Activated CD4-positive, alpha-beta T cell treated with anti-CD3 and anti-CD28 coated beads for 36 hours (primary cell): ENCODE measurements at regions of chr10 and their contacts with region 1.

Region 1: GRCh38 chr10:52883996-52884871 is 111.7 kb upstream of the MBL2 start:
- DNase-seq: peak; percentile 41
- ATAC-seq: no peak
- H3K4me3 Mint-ChIP-seq: no peak overlapping the region
- H3K27ac Mint-ChIP-seq: no peak overlapping the region
- H3K4me1 Mint-ChIP-seq: no peaks in the 10 kb centered on the region
- H3K27me3 Mint-ChIP-seq: no peaks in the 10 kb centered on the region

Region 2: DNA sequence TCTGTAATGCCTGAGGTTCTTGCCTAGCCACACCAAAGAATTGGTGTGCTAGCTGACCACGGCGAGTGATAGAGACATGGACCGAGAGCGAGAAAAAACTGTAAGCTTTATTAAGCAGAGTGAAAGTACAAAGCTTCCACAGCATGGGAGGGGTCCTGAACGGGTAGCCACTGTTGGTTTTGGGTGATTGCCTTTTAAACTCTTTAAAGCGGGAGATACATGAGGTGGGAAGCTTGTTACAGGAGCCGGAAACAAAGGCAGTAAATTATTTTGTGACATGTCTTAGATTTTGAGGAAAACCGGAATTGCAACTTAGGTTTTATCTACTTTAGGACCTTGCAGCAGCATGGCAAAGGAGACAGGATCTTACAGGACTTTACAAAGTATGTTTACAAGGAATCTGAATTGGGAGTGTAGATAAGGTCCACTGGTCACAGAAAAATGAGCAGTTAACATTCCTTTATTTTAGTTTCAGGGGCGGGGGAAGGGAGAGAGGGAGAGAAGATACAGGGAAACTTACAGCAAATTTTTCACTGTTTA is 141.0 kb after region 1 on chr10:
- CTCF ChIA-PET with region 1: no interaction called
- POLR2A ChIA-PET with region 1: no interaction called
- intact Hi-C with region 1: no loop called
- DNase-seq: no peak
- ATAC-seq: no peak
- H3K4me3 Mint-ChIP-seq: no peak overlapping the region
- H3K27ac Mint-ChIP-seq: no peak overlapping the region
- H3K4me1 Mint-ChIP-seq: no peaks in the 10 kb centered on the region
- H3K27me3 Mint-ChIP-seq: no peaks in the 10 kb centered on the region

Region 3: DNA sequence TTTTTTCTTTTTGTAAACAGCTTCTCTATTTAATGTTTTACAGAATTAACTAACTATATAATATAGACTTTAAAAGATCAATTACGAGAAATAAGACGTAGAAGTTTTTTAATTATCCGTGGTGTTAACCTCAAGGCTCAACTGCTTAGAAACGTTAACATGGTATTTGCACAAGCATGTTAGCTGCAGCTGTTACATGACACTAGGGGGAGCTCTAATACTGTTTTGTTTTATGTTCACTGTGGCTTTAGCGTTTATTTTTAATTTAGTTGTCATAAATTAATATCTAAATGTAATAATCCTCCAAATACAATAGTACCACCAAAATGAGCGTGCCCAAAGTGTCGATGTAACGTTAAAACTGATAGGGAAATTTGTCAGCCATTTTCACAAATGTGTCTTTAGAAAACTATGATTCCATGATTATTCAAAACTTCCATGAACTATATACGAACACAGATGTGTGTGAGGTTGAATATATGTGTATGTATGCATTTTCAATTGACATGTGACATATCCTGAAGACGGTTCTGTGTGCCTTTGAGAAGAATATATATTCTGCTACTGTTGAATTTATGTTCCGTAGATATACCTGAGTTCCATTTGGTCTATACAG is 717.1 kb after region 1 on chr10:
- CTCF ChIA-PET with region 1: no interaction called
- POLR2A ChIA-PET with region 1: no interaction called
- intact Hi-C with region 1: loop called in 1 of 2 experiments (anchors 10 kb)
- DNase-seq: no peak
- ATAC-seq: no peak
- H3K4me3 Mint-ChIP-seq: no peak overlapping the region
- H3K27ac Mint-ChIP-seq: no peak overlapping the region
- H3K4me1 Mint-ChIP-seq: no peaks in the 10 kb centered on the region
- H3K27me3 Mint-ChIP-seq: no peaks in the 10 kb centered on the region